Left lung (tissue), 14 donors: ENCODE measurements at regions of chr17 and their contacts with region 1.

Region 1: GRCh38 chr17:33550261-33550660 is 257.2 kb upstream of the ASIC2 start:
- DNase-seq: no peak
- ATAC-seq: no peak
- H3K4me3 ChIP-seq: no peak overlapping the region
- H3K27ac ChIP-seq: no peak overlapping the region
- H3K4me1 ChIP-seq: no peaks in the 10 kb centered on the region
- H3K27me3 ChIP-seq: peaks cover 0 to 6% of the 10 kb centered on the region in 2 donors
- CTCF ChIP-seq: no peak

Region 2: DNA sequence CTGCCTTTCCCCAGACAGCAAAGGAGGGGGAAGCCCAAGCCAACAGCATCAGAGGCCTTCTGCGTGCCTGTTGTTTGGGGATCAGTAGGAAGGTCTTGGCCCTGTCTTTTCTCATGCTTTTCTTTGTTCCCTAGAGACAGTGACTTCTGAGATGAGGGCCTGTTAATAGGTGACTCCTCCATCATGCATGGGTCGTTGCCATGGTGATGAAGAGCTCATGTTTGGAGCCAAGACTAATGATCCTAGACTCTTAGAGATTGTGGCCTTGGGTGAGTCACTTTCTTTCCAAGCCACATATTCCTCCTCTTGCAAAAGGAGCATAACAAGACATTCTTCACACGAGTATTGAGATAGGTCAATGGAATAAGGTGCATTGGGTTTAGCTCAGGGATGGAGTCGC is 56.1 kb before region 1 on chr17:
- intact Hi-C with region 1: loop called in 1 of 2 experiments (anchors 10 kb)
- DNase-seq: no peak
- ATAC-seq: no peak
- H3K4me3 ChIP-seq: no peak overlapping the region
- H3K27ac ChIP-seq: no peak overlapping the region
- H3K4me1 ChIP-seq: no peaks in the 10 kb centered on the region
- H3K27me3 ChIP-seq: no peaks in the 10 kb centered on the region
- CTCF ChIP-seq: no peak

Region 3: DNA sequence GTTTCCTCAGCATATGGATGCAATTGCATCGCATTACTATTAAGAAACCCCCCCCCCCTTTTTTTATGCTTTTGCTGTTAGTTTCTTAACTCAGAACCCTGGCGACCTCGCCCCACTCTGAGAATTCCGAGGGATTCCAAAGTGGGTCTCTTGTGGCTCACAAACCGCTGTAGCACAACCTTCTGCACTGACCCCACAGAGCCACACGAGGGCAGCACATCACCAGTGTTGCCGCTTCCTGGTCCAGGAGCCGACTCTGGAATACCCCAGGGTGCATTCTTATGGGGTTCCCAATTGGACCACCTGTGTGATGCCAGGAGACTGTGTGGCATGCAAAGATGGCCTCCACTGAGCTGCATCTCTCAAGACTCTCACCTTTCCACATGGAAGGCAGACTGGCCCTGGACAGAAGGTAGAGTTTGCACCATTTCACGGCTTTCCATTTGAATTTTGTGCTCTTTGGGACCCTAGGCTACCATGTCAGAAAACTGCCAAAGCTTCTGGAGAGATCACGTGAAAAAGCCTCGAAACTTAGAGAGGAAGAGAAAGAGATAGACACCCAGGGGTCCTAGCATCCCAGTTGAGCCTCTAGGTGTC is 175.5 kb after region 1 on chr17:
- intact Hi-C with region 1: no loop called
- DNase-seq: peak in 2 of 4 donors; percentile 4 to 19
- ATAC-seq: peak; percentile 82
- H3K4me3 ChIP-seq: no peak overlapping the region
- H3K27ac ChIP-seq: no peak overlapping the region
- H3K4me1 ChIP-seq: no peaks in the 10 kb centered on the region
- H3K27me3 ChIP-seq: peaks cover 0 to 33% of the 10 kb centered on the region in 2 donors
- CTCF ChIP-seq: peak; percentile 55 to 63